H1 (cell line): ENCODE measurements at regions of chr14 and their contacts with region 1.

Region 1: DNA sequence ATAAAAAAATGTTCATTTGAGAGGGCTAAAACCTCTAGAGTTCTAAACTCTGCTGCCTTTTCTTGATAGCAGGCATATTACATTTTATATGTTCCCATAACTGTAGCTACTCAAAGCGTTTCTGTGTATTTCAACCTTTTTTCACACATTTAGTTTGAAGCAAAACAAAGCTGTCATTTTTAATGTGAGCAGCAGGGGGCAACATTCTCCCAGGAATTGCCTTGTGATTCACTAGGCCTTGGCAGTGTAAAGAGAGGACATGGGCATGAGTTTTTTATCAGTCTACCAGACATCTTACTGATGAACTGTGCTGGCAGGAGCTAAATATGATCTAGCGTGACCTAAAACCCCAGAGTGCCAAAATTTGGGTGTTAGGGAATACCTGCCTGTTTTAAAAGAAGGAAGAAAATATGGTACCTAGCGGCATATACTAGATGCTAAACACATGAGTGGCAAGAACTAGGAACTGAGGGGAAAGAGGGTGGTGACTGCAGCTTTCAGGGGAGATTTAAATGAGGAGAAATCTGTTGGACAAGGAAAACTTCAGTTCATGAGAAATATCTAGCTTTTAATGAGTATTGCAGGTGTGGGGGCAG is 65.3 kb downstream of the IFT43 start:
- DNase-seq: peak in 1 of 2 experiments; percentile 79
- H3K4me3 ChIP-seq: no peak overlapping the region
- H3K27ac ChIP-seq: no peak overlapping the region
- H3K4me1 ChIP-seq: peaks cover 2 to 11% (median 5%) of the 10 kb centered on the region in 4 experiments
- H3K27me3 ChIP-seq: no peaks in the 10 kb centered on the region
- CTCF ChIP-seq: peak in 2 of 3 experiments; percentile 77 to 83; a peak in 3 of 4 replicates
- EP300 ChIP-seq: no peak
- POLR2A ChIP-seq: no peak
- RAD21 ChIP-seq: peak; percentile 95 to 96

Region 2: DNA sequence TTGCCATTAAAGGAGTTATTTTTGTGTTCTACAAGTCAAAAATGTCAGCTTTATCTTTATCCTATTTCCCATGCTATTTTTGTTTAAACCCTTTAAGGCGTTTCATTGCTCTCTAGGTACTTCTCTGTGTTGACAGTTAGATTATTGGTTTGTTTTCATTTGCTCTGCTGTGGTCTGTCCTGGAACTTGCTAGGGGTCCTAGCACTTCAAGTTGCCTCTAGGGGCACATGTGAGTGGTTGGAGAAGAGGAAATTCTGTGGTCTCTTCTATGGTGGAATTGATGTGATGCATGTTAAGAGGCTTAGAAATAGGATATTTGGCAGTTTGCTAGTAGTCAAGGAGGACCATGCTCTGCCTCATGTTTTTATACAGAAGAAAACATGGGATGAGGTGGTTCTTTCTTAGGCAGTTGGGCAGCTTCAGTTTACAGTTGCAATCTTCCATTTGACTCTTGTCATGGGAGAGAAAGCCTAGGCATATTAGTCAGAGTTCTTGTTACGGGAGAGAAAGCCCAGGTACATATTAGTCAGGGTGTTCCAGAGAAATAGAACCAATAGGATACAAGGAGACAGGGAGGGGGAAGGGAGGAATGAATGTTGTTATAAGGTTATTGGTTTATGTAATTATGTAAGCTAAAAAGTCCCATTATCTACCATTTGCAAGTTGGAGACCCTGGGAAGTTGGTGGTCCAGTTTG is 375.5 kb before region 1 on chr14:
- CTCF ChIA-PET with region 1: no interaction called
- POLR2A ChIA-PET with region 1: no interaction called
- DNase-seq: no peak
- H3K4me3 ChIP-seq: no peak overlapping the region
- H3K27ac ChIP-seq: no peak overlapping the region
- H3K4me1 ChIP-seq: no peaks in the 10 kb centered on the region
- H3K27me3 ChIP-seq: no peaks in the 10 kb centered on the region
- CTCF ChIP-seq: peak in 2 of 3 experiments; percentile 41 to 54; a peak in 3 of 4 replicates
- EP300 ChIP-seq: no peak
- POLR2A ChIP-seq: no peak
- RAD21 ChIP-seq: peak in 1 of 2 experiments; percentile 28; a peak in 2 of 4 replicates

Region 3: GRCh38 chr14:76034566-76034965 is 16.3 kb before region 1 on chr14:
- CTCF ChIA-PET with region 1: interaction called, 10 read pairs
- POLR2A ChIA-PET with region 1: no interaction called
- DNase-seq: peak in 1 of 2 experiments; percentile 13
- H3K4me3 ChIP-seq: no peak overlapping the region
- H3K27ac ChIP-seq: no peak overlapping the region
- H3K4me1 ChIP-seq: no peaks in the 10 kb centered on the region
- H3K27me3 ChIP-seq: no peaks in the 10 kb centered on the region
- CTCF ChIP-seq: no peak
- EP300 ChIP-seq: no peak
- POLR2A ChIP-seq: no peak
- RAD21 ChIP-seq: no peak

Region 4: GRCh38 chr14:76083796-76084765 is 33.2 kb after region 1 on chr14:
- CTCF ChIA-PET with region 1: interaction called, 13 read pairs
- POLR2A ChIA-PET with region 1: no interaction called
- DNase-seq: no peak
- H3K4me3 ChIP-seq: 0 out of 8 replicates have a peak overlapping the region, but pooled peaks of 1 of the 4 experiments have one; percentile 11
- H3K27ac ChIP-seq: no peak overlapping the region
- H3K4me1 ChIP-seq: peaks cover 9 to 17% (median 13%) of the 10 kb centered on the region in 4 experiments
- H3K27me3 ChIP-seq: peaks cover 0 to 3% (median 0%) of the 10 kb centered on the region in 4 experiments; a peak in 2 of 7 replicates
- CTCF ChIP-seq: no peak
- EP300 ChIP-seq: no peak
- POLR2A ChIP-seq: no peak
- RAD21 ChIP-seq: peak in 1 of 2 experiments; percentile 8; a peak in 1 of 4 replicates

Region 5: DNA sequence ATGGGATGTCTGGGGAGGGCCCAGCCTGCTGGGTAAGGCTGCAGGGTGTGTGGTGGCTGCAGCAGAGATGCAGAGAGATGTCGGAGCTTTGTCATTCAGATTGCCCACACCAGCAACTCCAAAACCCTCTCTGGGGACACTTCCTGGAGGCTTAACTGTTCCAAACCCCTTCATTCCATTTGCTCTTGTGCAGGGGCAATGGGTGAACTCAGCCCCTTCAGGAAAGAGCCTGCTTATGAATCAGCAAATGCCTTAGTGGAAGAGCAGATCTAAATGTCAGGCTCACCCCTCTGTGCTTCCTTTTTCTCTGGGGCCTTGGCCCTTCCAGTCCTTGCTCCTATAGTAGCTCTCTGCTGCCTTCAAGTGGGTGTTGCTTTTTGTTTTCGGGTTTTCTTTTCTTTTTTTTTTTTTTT is 64.1 kb after region 1 on chr14:
- CTCF ChIA-PET with region 1: interaction called, 20 read pairs
- POLR2A ChIA-PET with region 1: no interaction called
- DNase-seq: no peak
- H3K4me3 ChIP-seq: no peak overlapping the region
- H3K27ac ChIP-seq: no peak overlapping the region
- H3K4me1 ChIP-seq: peaks cover 21 to 39% (median 25%) of the 10 kb centered on the region in 4 experiments
- H3K27me3 ChIP-seq: peaks cover 0 to 4% (median 3%) of the 10 kb centered on the region in 4 experiments; a peak in 2 of 7 replicates
- CTCF ChIP-seq: peak in 2 of 3 experiments; percentile 22 to 26; a peak in 2 of 4 replicates
- EP300 ChIP-seq: no peak
- POLR2A ChIP-seq: no peak
- RAD21 ChIP-seq: peak; percentile 43 to 55

Region 6: GRCh38 chr14:76181546-76181945 is 130.7 kb after region 1 on chr14:
- CTCF ChIA-PET with region 1: interaction called, 14 read pairs
- POLR2A ChIA-PET with region 1: no interaction called
- DNase-seq: no peak
- H3K4me3 ChIP-seq: no peak overlapping the region
- H3K27ac ChIP-seq: no peak overlapping the region
- H3K4me1 ChIP-seq: no peaks in the 10 kb centered on the region
- H3K27me3 ChIP-seq: no peaks in the 10 kb centered on the region
- CTCF ChIP-seq: peak in 2 of 3 experiments; percentile 4 to 11; a peak in 2 of 4 replicates
- EP300 ChIP-seq: no peak
- POLR2A ChIP-seq: no peak
- RAD21 ChIP-seq: no peak; a peak in 2 of 4 replicates